HepG2 (cell line): ENCODE measurements at regions of chr13 and their contacts with region 1.

Region 1: GRCh38 chr13:40682449-40683240 is 16.2 kb upstream of the FOXO1 start:
- DNase-seq: no peak
- ATAC-seq: peak; percentile 36; the same call in 1 of the 3 replicates
- H3K4me3 ChIP-seq: no peak overlapping the region
- H3K27ac ChIP-seq: no peak overlapping the region
- H3K4me1 ChIP-seq: peaks cover 23% of the 10 kb centered on the region
- H3K27me3 ChIP-seq: no peaks in the 10 kb centered on the region
- CTCF ChIP-seq: no peak; the same call in none of the 2 replicates
- EP300 ChIP-seq: no peak
- POLR2A ChIP-seq: no peak
- RAD21 ChIP-seq: no peak

Region 2: DNA sequence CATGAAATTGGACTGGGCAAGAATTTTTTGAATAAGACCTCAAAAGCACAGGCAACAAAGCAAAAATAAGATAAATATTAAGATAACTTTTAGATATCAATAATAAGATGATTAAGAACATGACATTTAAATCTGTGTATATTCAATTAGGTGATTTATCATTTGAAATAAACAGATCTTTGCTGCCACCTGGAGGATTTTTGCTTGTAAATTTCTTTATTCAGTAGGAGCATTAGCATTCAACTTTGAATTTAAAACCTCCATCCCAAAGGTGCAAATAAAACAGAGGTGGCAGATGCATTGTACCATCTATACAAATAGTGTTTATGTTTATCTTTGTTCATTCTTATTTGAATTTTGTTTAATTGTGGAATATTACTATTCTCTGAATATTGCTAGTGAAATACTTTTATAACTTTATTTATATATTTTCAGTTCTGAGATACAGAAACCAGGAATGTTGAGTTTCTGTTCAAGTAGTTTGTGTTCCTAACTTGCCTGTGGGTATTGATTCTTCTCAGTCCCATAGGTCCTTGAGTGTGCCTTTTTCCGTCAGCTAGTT is 1006.2 kb before region 1 on chr13:
- CTCF ChIA-PET with region 1: no interaction called
- POLR2A ChIA-PET with region 1: no interaction called
- in situ Hi-C with region 1: loop called (anchors 10 kb)
- intact Hi-C with region 1: no loop called
- DNase-seq: peak; percentile 28
- ATAC-seq: no peak
- H3K4me3 ChIP-seq: no peak overlapping the region
- H3K27ac ChIP-seq: no peak overlapping the region
- H3K4me1 ChIP-seq: no peaks in the 10 kb centered on the region
- H3K27me3 ChIP-seq: no peaks in the 10 kb centered on the region
- CTCF ChIP-seq: no peak
- EP300 ChIP-seq: no peak
- POLR2A ChIP-seq: no peak
- RAD21 ChIP-seq: no peak

Region 3: GRCh38 chr13:39684531-39685137 is 998.0 kb before region 1 on chr13:
- CTCF ChIA-PET with region 1: interaction called, 13 read pairs
- POLR2A ChIA-PET with region 1: no interaction called
- in situ Hi-C with region 1: loop called (anchors 10 kb)
- intact Hi-C with region 1: loop called (anchors 1 kb)
- DNase-seq: peak; percentile 31
- ATAC-seq: peak; percentile 44; the same call in 1 of the 3 replicates
- H3K4me3 ChIP-seq: no peak overlapping the region
- H3K27ac ChIP-seq: no peak overlapping the region
- H3K4me1 ChIP-seq: no peaks in the 10 kb centered on the region
- H3K27me3 ChIP-seq: no peaks in the 10 kb centered on the region
- CTCF ChIP-seq: peak; percentile 33
- EP300 ChIP-seq: no peak
- POLR2A ChIP-seq: no peak
- RAD21 ChIP-seq: no peak

Region 4: GRCh38 chr13:39777527-39778061 is 905.1 kb before region 1 on chr13:
- CTCF ChIA-PET with region 1: no interaction called
- POLR2A ChIA-PET with region 1: no interaction called
- in situ Hi-C with region 1: loop called (anchors 25 kb)
- intact Hi-C with region 1: no loop called
- DNase-seq: no peak
- ATAC-seq: peak; percentile 65
- H3K4me3 ChIP-seq: no peak overlapping the region
- H3K27ac ChIP-seq: no peak overlapping the region
- H3K4me1 ChIP-seq: no peaks in the 10 kb centered on the region
- H3K27me3 ChIP-seq: no peaks in the 10 kb centered on the region
- CTCF ChIP-seq: no peak
- EP300 ChIP-seq: no peak
- POLR2A ChIP-seq: no peak
- RAD21 ChIP-seq: no peak

Region 5: GRCh38 chr13:39942552-39943273 is 739.9 kb before region 1 on chr13:
- CTCF ChIA-PET with region 1: interaction called, 32 read pairs
- POLR2A ChIA-PET with region 1: no interaction called
- in situ Hi-C with region 1: loop called (anchors 5 kb)
- intact Hi-C with region 1: loop called (anchors 1 kb)
- DNase-seq: peak; percentile 66
- ATAC-seq: peak; percentile 100
- H3K4me3 ChIP-seq: no peak overlapping the region
- H3K27ac ChIP-seq: no peak overlapping the region
- H3K4me1 ChIP-seq: no peaks in the 10 kb centered on the region
- H3K27me3 ChIP-seq: no peaks in the 10 kb centered on the region; a peak in 1 of 5 replicates
- CTCF ChIP-seq: peak; percentile 91
- EP300 ChIP-seq: no peak
- POLR2A ChIP-seq: no peak
- RAD21 ChIP-seq: peak; percentile 79

Region 6: GRCh38 chr13:40069173-40070044 is 613.2 kb before region 1 on chr13:
- CTCF ChIA-PET with region 1: interaction called, 19 read pairs
- POLR2A ChIA-PET with region 1: interaction called, 3 read pairs
- in situ Hi-C with region 1: loop called (anchors 5 kb)
- intact Hi-C with region 1: loop called (anchors 1 kb)
- DNase-seq: peak; percentile 67
- ATAC-seq: peak; percentile 75
- H3K4me3 ChIP-seq: no peak overlapping the region
- H3K27ac ChIP-seq: no peak overlapping the region
- H3K4me1 ChIP-seq: peaks cover 69% of the 10 kb centered on the region
- H3K27me3 ChIP-seq: no peaks in the 10 kb centered on the region
- CTCF ChIP-seq: peak; percentile 85
- EP300 ChIP-seq: no peak
- POLR2A ChIP-seq: no peak
- RAD21 ChIP-seq: peak; percentile 60; the same call in 1 of the 2 replicates

Region 7: DNA sequence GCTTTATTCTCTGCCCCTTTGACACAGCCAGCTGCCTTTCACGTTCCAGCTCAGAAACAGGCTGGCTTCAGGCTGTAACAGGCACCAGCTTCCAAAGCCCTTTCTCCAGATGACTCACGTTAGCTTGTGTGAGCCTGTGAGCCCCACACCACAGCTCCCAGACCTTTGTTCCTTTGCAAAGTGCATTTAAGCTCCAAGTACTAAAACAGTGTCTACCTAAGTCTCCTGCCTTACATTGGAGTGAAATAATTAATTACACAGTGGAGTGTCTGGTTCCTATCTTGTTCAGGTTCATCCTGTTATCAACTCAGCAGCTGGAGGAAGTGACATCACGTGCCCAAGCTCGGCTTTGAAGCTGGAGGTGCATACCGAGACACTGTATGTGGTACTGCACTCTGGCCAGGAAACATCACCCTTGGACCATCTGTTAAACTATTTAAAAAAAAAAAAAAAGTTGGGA is 492.0 kb before region 1 on chr13:
- CTCF ChIA-PET with region 1: no interaction called
- POLR2A ChIA-PET with region 1: no interaction called
- in situ Hi-C with region 1: no loop called
- intact Hi-C with region 1: no loop called
- DNase-seq: peak; percentile 6
- ATAC-seq: peak; percentile 85
- H3K4me3 ChIP-seq: no peak overlapping the region
- H3K27ac ChIP-seq: no peak overlapping the region
- H3K4me1 ChIP-seq: peaks cover 14% of the 10 kb centered on the region
- H3K27me3 ChIP-seq: peaks cover 0 to 15% of the 10 kb centered on the region in 2 experiments; a peak in 3 of 5 replicates
- CTCF ChIP-seq: no peak
- EP300 ChIP-seq: no peak
- POLR2A ChIP-seq: no peak
- RAD21 ChIP-seq: no peak